A549 (cell line): ENCODE measurements at regions of chr4 and their contacts with region 1.

Region 1: GRCh38 chr4:57163530-57164459 is 53.6 kb upstream of the IGFBP7 start:
- DNase-seq: peak; percentile 38 to 78
- ATAC-seq: peak; percentile 94 to 99
- H3K4me3 ChIP-seq: peak overlapping the region; percentile 61
- H3K27ac ChIP-seq: peak overlapping the region; percentile 87 to 94
- H3K4me1 ChIP-seq: no peaks in the 10 kb centered on the region
- CTCF ChIP-seq: peak; percentile 66
- EP300 ChIP-seq: no peak
- POLR2A ChIP-seq: no peak
- RAD21 ChIP-seq: peak; percentile 73 to 77

Region 2: GRCh38 chr4:57064811-57065711 is 98.7 kb before region 1 on chr4:
- CTCF ChIA-PET with region 1: interaction called, 12 read pairs
- POLR2A ChIA-PET with region 1: no interaction called
- DNase-seq: peak; percentile 41 to 83
- ATAC-seq: peak; percentile 83 to 86
- H3K4me3 ChIP-seq: peak overlapping the region; percentile 22; the same call in 2 of the 3 replicates
- H3K27ac ChIP-seq: peak overlapping the region; percentile 84 to 88
- H3K4me1 ChIP-seq: peaks cover 85% of the 10 kb centered on the region
- CTCF ChIP-seq: no peak
- EP300 ChIP-seq: peak; percentile 55 to 78; a peak in 2 of 5 replicates
- POLR2A ChIP-seq: no peak
- RAD21 ChIP-seq: peak; percentile 25 to 31; a peak in 2 of 5 replicates

Region 3: GRCh38 chr4:57131849-57132742 is 31.7 kb before region 1 on chr4:
- CTCF ChIA-PET with region 1: interaction called, 14 read pairs
- POLR2A ChIA-PET with region 1: no interaction called
- DNase-seq: no peak
- ATAC-seq: peak in 1 of 2 experiments; percentile 20; a peak in 2 of 6 replicates
- H3K4me3 ChIP-seq: no peak overlapping the region
- H3K27ac ChIP-seq: peak overlapping the region in 1 of 2 experiments; percentile 21; a peak in 1 of 6 replicates
- H3K4me1 ChIP-seq: peaks cover 10% of the 10 kb centered on the region; the same call in 2 of the 3 replicates
- CTCF ChIP-seq: no peak
- EP300 ChIP-seq: no peak
- POLR2A ChIP-seq: no peak
- RAD21 ChIP-seq: no peak

Region 4: GRCh38 chr4:57187241-57187640 is 23.4 kb after region 1 on chr4:
- CTCF ChIA-PET with region 1: interaction called, 13 read pairs
- POLR2A ChIA-PET with region 1: no interaction called
- DNase-seq: no peak
- ATAC-seq: no peak
- H3K4me3 ChIP-seq: no peak overlapping the region
- H3K27ac ChIP-seq: no peak overlapping the region
- H3K4me1 ChIP-seq: no peaks in the 10 kb centered on the region
- CTCF ChIP-seq: no peak
- EP300 ChIP-seq: no peak
- POLR2A ChIP-seq: no peak
- RAD21 ChIP-seq: no peak

Region 5: GRCh38 chr4:57426779-57427395 is 263.1 kb after region 1 on chr4:
- CTCF ChIA-PET with region 1: interaction called, 19 read pairs
- POLR2A ChIA-PET with region 1: no interaction called
- DNase-seq: peak; percentile 35 to 71
- ATAC-seq: peak; percentile 73 to 90; a peak in 5 of 6 replicates
- H3K4me3 ChIP-seq: no peak overlapping the region
- H3K27ac ChIP-seq: no peak overlapping the region
- H3K4me1 ChIP-seq: peaks cover 7% of the 10 kb centered on the region; the same call in 1 of the 3 replicates
- CTCF ChIP-seq: peak; percentile 63
- EP300 ChIP-seq: no peak
- POLR2A ChIP-seq: no peak
- RAD21 ChIP-seq: peak; percentile 73